B cell (primary cell): ENCODE measurements at regions of chr12 and their contacts with region 1.

Region 1: GRCh38 chr12:94101738-94102660 is 46.4 kb upstream of the PLXNC1 start:
- DNase-seq: peak; percentile 90
- ATAC-seq: peak; percentile 84
- H3K4me3 ChIP-seq: peak overlapping the region; percentile 51 to 94 (median 65)
- H3K4me3 Mint-ChIP-seq: peak overlapping the region; percentile 91
- H3K27ac ChIP-seq: no peak overlapping the region
- H3K27ac Mint-ChIP-seq: peak overlapping the region; percentile 50
- H3K4me1 ChIP-seq: peaks cover 4 to 14% of the 10 kb centered on the region in 2 donors
- H3K4me1 Mint-ChIP-seq: peaks cover 10% of the 10 kb centered on the region
- H3K27me3 ChIP-seq: peaks cover 0 to 31% (median 11%) of the 10 kb centered on the region in 4 experiments
- H3K27me3 Mint-ChIP-seq: peaks cover 52% of the 10 kb centered on the region
- CTCF ChIP-seq: peak; percentile 78

Region 2: DNA sequence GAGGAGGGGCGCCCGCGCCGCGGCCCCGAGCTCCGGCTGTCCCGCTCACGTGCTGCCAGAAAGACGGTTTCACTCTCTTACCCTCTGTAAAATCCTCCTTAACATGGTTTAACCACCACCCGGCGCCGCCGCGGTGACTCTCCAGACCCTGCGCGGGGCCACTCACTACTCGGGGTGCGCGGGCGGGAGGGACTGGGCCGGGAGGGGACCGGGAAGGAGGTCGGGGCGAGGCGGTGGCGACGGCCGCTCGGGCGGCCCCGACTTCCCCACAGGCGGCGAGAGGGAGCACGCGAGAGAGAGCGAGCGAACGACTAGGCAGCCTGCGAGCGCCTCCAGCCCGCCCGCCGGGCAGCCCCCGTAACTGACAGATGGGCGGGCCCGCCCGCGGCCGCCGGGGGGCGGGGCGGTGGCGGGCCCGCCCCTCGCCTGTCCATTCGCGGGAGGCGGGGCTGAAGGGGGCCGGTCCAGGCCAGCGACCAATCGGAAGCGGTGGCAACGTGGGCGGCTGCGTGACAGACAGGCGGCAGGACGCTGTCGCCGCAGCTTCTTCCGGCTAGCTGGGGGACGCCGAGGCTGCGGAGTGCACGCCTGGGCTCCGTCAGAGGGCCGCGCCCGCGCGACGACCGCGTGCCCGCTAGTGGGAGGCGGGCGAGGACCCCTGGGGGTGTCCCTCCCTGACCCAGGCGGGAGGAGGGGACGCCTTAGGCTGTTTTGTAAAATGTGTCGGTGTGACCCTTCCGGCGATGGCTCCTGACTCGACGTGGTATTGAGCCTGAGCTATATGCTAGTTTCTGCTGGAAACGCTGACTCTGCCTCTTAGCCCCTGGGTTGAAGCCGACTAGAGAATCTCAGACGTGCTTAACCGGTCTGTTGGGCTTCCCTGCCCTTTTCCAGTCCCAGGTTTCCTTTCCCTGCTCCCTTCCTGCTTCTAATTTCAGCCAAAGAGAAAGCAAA is 1172.8 kb before region 1 on chr12 and contains the start of gene EEA1:
- CTCF ChIA-PET with region 1: interaction called, 10 read pairs
- POLR2A ChIA-PET with region 1: no interaction called
- intact Hi-C with region 1: no loop called
- DNase-seq: peak; percentile 97
- ATAC-seq: peak; percentile 82
- H3K4me3 ChIP-seq: peak within 1 kb of the TSS; percentile 64 to 91 (median 79)
- H3K4me3 Mint-ChIP-seq: peak within 1 kb of the TSS; percentile 96
- H3K27ac ChIP-seq: peak within 1 kb of the TSS; percentile 90 to 96
- H3K27ac Mint-ChIP-seq: peak within 1 kb of the TSS; percentile 96
- H3K4me1 ChIP-seq: peaks cover 23 to 24% of the 10 kb centered on the region in 2 donors
- H3K4me1 Mint-ChIP-seq: peaks cover 34% of the 10 kb centered on the region
- H3K27me3 ChIP-seq: no peaks in the 10 kb centered on the region
- H3K27me3 Mint-ChIP-seq: no peaks in the 10 kb centered on the region
- CTCF ChIP-seq: no peak
- total RNA-seq, gene EEA1: 24.4 and 26.3 TPM in 2 replicates

Region 3: DNA sequence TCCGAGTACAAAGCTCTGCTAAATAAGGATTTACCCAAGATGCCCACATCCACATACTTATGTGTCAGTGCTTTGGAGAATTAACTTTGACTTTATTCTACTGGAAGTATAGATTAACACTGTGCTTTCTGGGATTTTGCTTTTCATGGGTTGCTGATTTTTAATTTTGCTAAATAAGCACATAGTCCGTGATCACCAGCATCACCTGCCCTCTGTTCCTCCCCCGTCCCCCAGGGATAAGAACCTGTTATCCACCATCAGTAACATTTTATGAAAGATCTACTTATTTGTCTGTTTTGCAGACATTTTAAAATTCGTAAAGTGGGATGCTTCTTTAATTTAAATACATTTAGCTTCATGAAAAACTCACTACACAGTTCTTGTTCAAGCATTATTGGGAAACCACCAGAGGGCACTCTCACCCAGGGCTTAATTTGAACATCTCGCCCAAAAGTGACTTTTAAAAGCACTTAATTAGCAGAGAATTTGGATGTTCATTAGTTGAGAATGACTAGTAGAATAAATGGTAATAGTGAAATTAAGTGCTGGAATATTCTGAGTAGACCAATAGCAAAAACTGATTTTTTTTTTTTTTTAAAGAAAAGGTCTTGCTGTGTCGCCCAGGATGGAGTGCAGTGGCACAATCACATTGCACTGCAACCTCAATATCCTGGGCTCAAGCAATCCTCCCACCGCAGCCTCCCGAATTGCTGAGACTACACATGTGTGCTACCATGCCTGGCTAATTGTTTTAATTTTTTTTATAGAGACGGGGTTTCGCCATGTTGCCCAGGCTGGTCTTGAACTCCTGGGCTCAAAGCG is 599.0 kb before region 1 on chr12:
- CTCF ChIA-PET with region 1: interaction called, 438 read pairs
- POLR2A ChIA-PET with region 1: interaction called, 7 read pairs
- intact Hi-C with region 1: loop called (anchors 1 kb)
- DNase-seq: peak; percentile 67
- ATAC-seq: no peak
- H3K4me3 ChIP-seq: no peak overlapping the region
- H3K4me3 Mint-ChIP-seq: no peak overlapping the region
- H3K27ac ChIP-seq: no peak overlapping the region
- H3K27ac Mint-ChIP-seq: no peak overlapping the region
- H3K4me1 ChIP-seq: no peaks in the 10 kb centered on the region
- H3K4me1 Mint-ChIP-seq: peaks cover 5% of the 10 kb centered on the region
- H3K27me3 ChIP-seq: no peaks in the 10 kb centered on the region
- H3K27me3 Mint-ChIP-seq: no peaks in the 10 kb centered on the region
- CTCF ChIP-seq: peak; percentile 92

Region 4: GRCh38 chr12:93569656-93570551 is 532.1 kb before region 1 on chr12:
- CTCF ChIA-PET with region 1: interaction called, 189 read pairs
- POLR2A ChIA-PET with region 1: interaction called, 6 read pairs
- intact Hi-C with region 1: loop called (anchors 1 kb)
- DNase-seq: peak; percentile 83
- ATAC-seq: peak; percentile 51
- H3K4me3 ChIP-seq: peak overlapping the region; percentile 63 to 89 (median 67)
- H3K4me3 Mint-ChIP-seq: peak overlapping the region; percentile 88
- H3K27ac ChIP-seq: no peak overlapping the region
- H3K27ac Mint-ChIP-seq: peak overlapping the region; percentile 47
- H3K4me1 ChIP-seq: peaks cover 26 to 33% of the 10 kb centered on the region in 2 donors
- H3K4me1 Mint-ChIP-seq: peaks cover 21% of the 10 kb centered on the region
- H3K27me3 ChIP-seq: peaks cover 0 to 43% (median 30%) of the 10 kb centered on the region in 4 experiments
- H3K27me3 Mint-ChIP-seq: peaks cover 44% of the 10 kb centered on the region
- CTCF ChIP-seq: peak; percentile 71

Region 5: DNA sequence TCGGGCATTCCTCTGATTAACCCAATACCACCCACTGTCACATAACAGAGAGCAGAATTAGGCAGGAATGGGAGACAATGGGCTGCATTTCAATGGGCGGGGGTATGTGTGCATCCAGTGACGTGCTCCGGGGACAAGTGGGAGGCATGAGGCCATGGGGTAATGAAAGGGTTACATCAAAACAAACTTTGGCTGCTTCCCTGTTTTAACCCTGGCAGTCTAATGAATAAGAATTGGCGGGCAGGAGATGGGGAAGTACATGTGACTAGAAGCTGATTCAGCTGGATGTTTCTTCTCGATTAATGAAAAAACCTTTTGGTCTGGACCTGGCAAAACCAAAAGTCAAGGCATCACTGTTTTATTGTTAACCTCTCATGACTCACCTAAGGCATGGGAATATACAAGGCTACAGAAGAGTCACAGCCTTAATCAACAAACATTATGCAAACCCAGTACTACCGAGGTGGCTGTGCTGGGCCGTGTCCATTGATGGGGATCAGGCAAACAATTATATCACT is 485.4 kb before region 1 on chr12:
- CTCF ChIA-PET with region 1: no interaction called
- POLR2A ChIA-PET with region 1: no interaction called
- intact Hi-C with region 1: no loop called
- DNase-seq: no peak
- ATAC-seq: no peak
- H3K4me3 ChIP-seq: no peak overlapping the region
- H3K4me3 Mint-ChIP-seq: no peak overlapping the region
- H3K27ac ChIP-seq: no peak overlapping the region
- H3K27ac Mint-ChIP-seq: no peak overlapping the region
- H3K4me1 ChIP-seq: no peaks in the 10 kb centered on the region
- H3K4me1 Mint-ChIP-seq: no peaks in the 10 kb centered on the region
- H3K27me3 ChIP-seq: peaks cover 0 to 6% (median 0%) of the 10 kb centered on the region in 4 experiments
- H3K27me3 Mint-ChIP-seq: peaks cover 26% of the 10 kb centered on the region
- CTCF ChIP-seq: no peak

Region 6: GRCh38 chr12:94074980-94075928 is 26.7 kb before region 1 on chr12:
- CTCF ChIA-PET with region 1: interaction called, 36 read pairs
- POLR2A ChIA-PET with region 1: no interaction called
- intact Hi-C with region 1: no loop called
- DNase-seq: no peak
- ATAC-seq: no peak
- H3K4me3 ChIP-seq: no peak overlapping the region
- H3K4me3 Mint-ChIP-seq: no peak overlapping the region
- H3K27ac ChIP-seq: no peak overlapping the region
- H3K27ac Mint-ChIP-seq: no peak overlapping the region
- H3K4me1 ChIP-seq: no peaks in the 10 kb centered on the region
- H3K4me1 Mint-ChIP-seq: no peaks in the 10 kb centered on the region
- H3K27me3 ChIP-seq: peaks cover 0 to 7% (median 2%) of the 10 kb centered on the region in 4 experiments
- H3K27me3 Mint-ChIP-seq: peaks cover 47% of the 10 kb centered on the region
- CTCF ChIP-seq: no peak

Region 7: DNA sequence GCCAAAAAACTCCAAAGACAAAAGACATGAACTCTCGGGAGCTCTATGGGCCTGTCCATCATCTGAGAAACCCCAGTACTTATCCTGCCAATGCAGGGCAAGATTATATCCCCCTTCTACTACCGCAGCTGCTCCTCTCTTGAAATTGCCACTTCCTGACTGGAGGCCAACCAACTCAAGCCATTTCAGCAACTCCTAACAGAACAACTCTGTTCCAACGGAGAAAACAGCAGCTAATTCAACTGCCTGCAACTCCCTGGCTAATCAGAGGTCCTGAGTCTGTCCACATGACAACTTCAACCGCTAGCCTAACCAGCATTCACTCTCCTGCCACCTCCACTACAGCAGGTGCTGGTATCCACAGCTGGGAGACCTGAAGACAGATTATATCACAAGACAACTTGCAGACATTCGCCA is 333.5 kb after region 1 on chr12:
- CTCF ChIA-PET with region 1: interaction called, 14 read pairs
- POLR2A ChIA-PET with region 1: no interaction called
- intact Hi-C with region 1: no loop called
- DNase-seq: peak; percentile 11
- ATAC-seq: no peak
- H3K4me3 ChIP-seq: no peak overlapping the region
- H3K4me3 Mint-ChIP-seq: no peak overlapping the region
- H3K27ac ChIP-seq: no peak overlapping the region
- H3K27ac Mint-ChIP-seq: no peak overlapping the region
- H3K4me1 ChIP-seq: peaks cover 6 to 8% of the 10 kb centered on the region in 2 donors
- H3K4me1 Mint-ChIP-seq: peaks cover 11% of the 10 kb centered on the region
- H3K27me3 ChIP-seq: no peaks in the 10 kb centered on the region
- H3K27me3 Mint-ChIP-seq: no peaks in the 10 kb centered on the region
- CTCF ChIP-seq: no peak